Left colon (tissue), 2 donors: ENCODE measurements at regions of chr6 and their contacts with region 1.

Region 1: GRCh38 chr6:14758421-14759081 is 487.3 kb upstream of the JARID2 start:
- DNase-seq: peak in 1 of 2 donors; percentile 35
- ATAC-seq: peak; percentile 40

Region 2: DNA sequence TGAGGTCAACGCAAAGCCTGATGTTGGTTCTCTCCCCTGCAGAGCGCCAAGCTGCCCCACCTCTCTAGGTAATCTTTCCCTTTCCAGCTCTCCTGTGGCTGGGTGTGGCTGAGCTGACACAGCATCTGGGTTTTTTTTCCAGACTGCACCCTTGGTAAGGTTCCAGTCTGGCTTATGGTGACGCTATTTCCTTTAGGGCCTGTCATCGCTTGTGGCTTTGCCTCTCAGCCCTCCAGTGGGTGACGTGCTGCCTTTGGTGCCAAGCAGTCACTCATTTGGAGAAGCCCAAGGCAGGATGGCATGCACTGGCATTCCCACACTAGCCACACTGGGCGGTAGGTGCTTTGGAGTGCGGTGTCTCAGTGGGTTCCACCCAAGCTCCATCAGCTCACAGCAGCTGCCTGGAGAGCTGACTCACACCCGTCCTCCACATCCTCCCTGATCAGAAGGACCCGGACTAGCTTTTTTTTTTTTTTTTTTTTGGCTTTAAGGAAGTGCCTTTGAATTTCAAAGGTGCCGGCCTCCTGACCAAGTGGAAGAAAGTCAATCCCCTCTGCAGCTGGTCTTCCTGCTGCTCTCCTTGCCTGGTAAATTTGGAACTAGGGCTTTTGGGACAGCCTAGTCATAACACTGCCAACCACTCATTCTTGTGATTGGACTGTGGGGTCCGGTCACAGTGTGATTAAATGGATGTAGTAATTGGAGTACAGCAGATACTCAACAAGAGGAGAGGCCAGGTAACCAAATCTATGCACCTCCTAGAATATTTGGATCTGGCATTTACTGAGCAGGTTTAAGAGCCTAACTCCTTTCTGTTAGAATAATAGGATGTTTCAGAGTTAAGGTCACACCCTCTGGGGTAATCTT is 487.4 kb before region 1 on chr6:
- intact Hi-C with region 1: loop called in 1 of 2 experiments (anchors 5 kb)
- DNase-seq: peak; percentile 50 to 56
- ATAC-seq: peak; percentile 96